Left lung (tissue), 14 donors: ENCODE measurements at regions of chr3 and their contacts with region 1.

Region 1: DNA sequence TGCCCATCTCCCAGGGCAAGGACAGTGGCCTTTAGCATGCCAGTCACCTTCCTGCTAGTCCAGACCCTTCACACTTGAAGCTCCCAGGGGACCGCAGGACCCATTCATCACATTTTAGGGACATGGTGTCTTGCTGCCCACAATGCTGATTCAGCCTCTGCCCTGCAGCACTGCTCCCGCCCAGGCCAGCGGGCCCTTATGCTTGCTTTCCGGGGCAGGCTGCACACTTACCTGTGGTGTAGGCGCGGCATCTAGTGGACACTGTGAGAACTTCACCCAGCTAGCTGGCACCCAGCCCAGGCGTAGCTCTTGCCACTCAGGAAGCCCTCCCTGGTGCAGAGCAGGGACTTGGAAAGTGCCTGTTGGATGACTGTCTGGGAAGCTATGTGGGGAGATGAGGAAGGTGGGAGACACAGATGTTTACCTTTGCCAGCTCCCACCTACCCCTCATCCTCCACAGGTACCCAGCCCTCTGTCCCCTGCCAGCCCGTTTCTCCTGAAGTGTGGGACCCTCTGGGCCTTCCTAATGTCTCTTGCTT is 26.2 kb upstream of the NR2C2 start:
- DNase-seq: peak; percentile 83 to 93 (median 90)
- ATAC-seq: peak; percentile 97
- H3K4me3 ChIP-seq: no peak overlapping the region
- H3K27ac ChIP-seq: no peak overlapping the region
- H3K4me1 ChIP-seq: peaks cover 4 to 9% of the 10 kb centered on the region in 2 donors
- H3K27me3 ChIP-seq: no peaks in the 10 kb centered on the region
- CTCF ChIP-seq: peak; percentile 97 to 99

Region 2: GRCh38 chr3:14651440-14652251 is 269.5 kb before region 1 on chr3 and contains the start of gene CCDC174:
- intact Hi-C with region 1: no loop called
- DNase-seq: peak; percentile 94 to 98 (median 96)
- ATAC-seq: peak; percentile 99
- H3K4me3 ChIP-seq: peak within 1 kb of the TSS; percentile 86 to 87
- H3K27ac ChIP-seq: peak within 1 kb of the TSS; percentile 85 to 94
- H3K4me1 ChIP-seq: peaks cover 16 to 24% of the 10 kb centered on the region in 2 donors
- H3K27me3 ChIP-seq: no peaks in the 10 kb centered on the region
- CTCF ChIP-seq: no peak
- polyA plus RNA-seq, gene CCDC174: 32.8 to 42.2 (median 35.3) TPM

Region 3: DNA sequence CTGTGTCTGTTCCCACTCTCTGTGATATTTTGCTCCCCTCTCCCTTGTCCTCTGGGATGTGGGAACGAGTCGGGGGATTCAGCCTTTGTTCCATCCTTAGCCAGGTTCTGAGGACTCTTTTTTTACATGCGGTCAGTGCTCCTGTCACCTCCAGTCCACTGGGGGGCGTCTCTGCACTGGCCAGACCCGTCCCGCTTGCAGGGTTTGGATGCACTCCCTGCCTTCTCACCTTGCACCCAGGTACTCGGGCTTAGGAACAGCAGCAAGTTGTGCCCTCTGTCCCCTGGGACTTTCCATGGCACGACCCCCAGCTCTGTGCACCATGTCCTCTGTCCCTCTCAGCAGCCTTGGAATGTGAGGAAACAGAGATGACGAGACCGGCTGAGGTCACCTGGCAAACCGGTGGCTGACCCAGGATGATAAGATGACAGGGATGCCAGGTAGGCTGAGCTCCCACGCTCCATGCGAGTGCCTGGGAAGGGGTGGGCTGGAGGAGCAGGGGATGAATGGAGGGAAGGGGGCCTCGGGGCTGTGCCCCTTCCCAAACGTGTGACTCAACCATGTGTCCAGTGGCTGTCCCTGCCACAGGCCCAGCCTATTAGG is 129.7 kb before region 1 on chr3:
- intact Hi-C with region 1: loop called in 1 of 2 experiments (anchors 5 kb)
- DNase-seq: peak in 2 of 4 donors; percentile 54 to 71
- ATAC-seq: peak; percentile 87
- H3K4me3 ChIP-seq: no peak overlapping the region
- H3K27ac ChIP-seq: no peak overlapping the region
- H3K4me1 ChIP-seq: peaks cover 0 to 4% of the 10 kb centered on the region in 2 donors
- H3K27me3 ChIP-seq: no peaks in the 10 kb centered on the region
- CTCF ChIP-seq: peak; percentile 34 to 61

Region 4: DNA sequence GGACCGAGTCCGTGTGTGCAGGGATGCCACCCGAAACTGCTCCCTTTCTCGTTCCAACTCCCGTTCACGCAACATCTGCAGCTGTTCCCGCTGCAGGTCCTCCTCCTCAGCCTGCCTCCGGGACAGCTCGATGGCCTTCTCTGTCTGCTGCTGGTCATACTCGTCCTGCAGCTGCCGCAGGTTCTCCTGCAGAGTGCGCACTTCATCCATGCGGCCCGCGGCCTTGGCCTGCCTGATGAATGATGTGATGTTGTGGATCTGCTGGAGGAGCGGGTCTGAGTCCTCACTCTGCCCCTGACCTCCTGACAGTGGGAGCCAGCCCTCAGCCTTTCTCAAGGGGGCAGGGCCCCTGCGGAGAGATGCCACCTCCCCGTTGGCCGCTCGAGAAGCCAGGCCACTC is 153.3 kb after region 1 on chr3:
- intact Hi-C with region 1: no loop called
- DNase-seq: no peak
- ATAC-seq: no peak
- H3K4me3 ChIP-seq: no peak overlapping the region
- H3K27ac ChIP-seq: no peak overlapping the region
- H3K4me1 ChIP-seq: peaks cover 0 to 7% of the 10 kb centered on the region in 2 donors
- H3K27me3 ChIP-seq: no peaks in the 10 kb centered on the region
- CTCF ChIP-seq: no peak